ENCODE measurements at regions of chr18 and their contacts with region 1.

Region 1: GRCh38 chr18:62584241-62585120 is 61.7 kb downstream of the ZCCHC2 start:
- DNase-seq: peak; percentile 75 to 93
- ATAC-seq: peak; percentile 95 to 99 (median 97)
- H3K4me3 ChIP-seq: no peak overlapping the region
- H3K4me3 Mint-ChIP-seq: peak overlapping the region; percentile 74
- H3K27ac ChIP-seq: peak overlapping the region; percentile 20
- H3K27ac Mint-ChIP-seq: peak overlapping the region; percentile 67 to 84
- H3K4me1 ChIP-seq: peaks cover 21% of the 10 kb centered on the region
- H3K4me1 Mint-ChIP-seq: peaks cover 15 to 18% of the 10 kb centered on the region in 2 donors
- H3K27me3 ChIP-seq: no peaks in the 10 kb centered on the region
- H3K27me3 Mint-ChIP-seq: no peaks in the 10 kb centered on the region
- CTCF ChIP-seq: peak; percentile 82

Region 2: GRCh38 chr18:61825386-61825785 is 759.1 kb before region 1 on chr18:
- intact Hi-C with region 1: no loop called
- DNase-seq: no peak
- ATAC-seq: no peak
- H3K4me3 ChIP-seq: no peak overlapping the region
- H3K4me3 Mint-ChIP-seq: no peak overlapping the region
- H3K27ac ChIP-seq: no peak overlapping the region
- H3K27ac Mint-ChIP-seq: no peak overlapping the region
- H3K4me1 ChIP-seq: no peaks in the 10 kb centered on the region
- H3K4me1 Mint-ChIP-seq: no peaks in the 10 kb centered on the region
- H3K27me3 ChIP-seq: no peaks in the 10 kb centered on the region
- H3K27me3 Mint-ChIP-seq: peaks cover 12 to 13% of the 10 kb centered on the region in 2 donors
- CTCF ChIP-seq: no peak

Region 3: DNA sequence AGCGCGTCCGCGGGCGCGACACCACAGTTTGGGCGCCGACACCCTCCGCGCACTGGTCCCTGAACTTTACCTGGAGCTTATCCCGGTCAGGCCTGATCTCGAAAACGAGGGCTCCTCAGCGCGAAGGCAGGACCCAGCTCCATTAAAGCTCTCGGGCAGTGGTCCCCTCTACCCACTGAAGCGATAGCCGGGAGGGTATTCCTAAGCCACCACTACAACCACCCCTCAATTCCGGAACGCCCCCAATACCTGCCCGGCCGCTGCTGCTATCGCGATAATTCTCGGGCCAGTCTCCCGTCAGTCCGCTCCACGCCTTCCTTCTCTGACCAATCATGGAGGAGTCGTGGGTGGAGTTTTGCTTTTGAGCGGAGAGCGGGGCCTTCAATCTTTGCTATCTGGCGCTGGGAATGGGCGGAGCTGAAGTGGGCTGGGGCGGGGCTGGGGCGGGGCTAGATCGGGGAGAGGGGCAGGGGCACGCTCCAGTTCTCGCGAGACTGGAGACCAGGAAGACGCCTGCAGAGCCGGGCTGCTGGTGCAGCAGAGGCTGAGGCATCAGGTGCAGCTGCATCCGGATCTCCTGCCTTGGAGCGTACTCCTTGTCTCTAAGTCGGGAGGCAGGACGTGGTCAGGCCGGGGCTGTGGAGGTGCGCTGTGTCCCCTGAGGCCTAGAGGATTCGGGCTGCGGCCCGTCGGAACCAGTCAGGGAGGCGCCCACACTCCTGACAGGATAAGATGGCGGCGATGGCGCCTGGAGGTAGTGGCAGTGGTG is 397.5 kb before region 1 on chr18 and contains the starts of genes PIGN and RELCH:
- intact Hi-C with region 1: loop called (anchors 1 kb)
- DNase-seq: peak; percentile 85 to 98
- ATAC-seq: peak; percentile 90 to 99 (median 94)
- H3K4me3 ChIP-seq: peak within 1 kb of the TSS; percentile 95
- H3K4me3 Mint-ChIP-seq: peak within 1 kb of the TSS; percentile 100
- H3K27ac ChIP-seq: peak within 1 kb of the TSS; percentile 74
- H3K27ac Mint-ChIP-seq: peak within 1 kb of the TSS; percentile 96 to 98
- H3K4me1 ChIP-seq: peaks cover 20% of the 10 kb centered on the region
- H3K4me1 Mint-ChIP-seq: peaks cover 60 to 61% of the 10 kb centered on the region in 2 donors
- H3K27me3 ChIP-seq: no peaks in the 10 kb centered on the region
- H3K27me3 Mint-ChIP-seq: no peaks in the 10 kb centered on the region
- CTCF ChIP-seq: no peak
- total RNA-seq, gene PIGN: 12.2 to 21.7 (median 20.1) TPM
- total RNA-seq, gene RELCH: 60.1 to 69.9 (median 63.9) TPM

Region 4: DNA sequence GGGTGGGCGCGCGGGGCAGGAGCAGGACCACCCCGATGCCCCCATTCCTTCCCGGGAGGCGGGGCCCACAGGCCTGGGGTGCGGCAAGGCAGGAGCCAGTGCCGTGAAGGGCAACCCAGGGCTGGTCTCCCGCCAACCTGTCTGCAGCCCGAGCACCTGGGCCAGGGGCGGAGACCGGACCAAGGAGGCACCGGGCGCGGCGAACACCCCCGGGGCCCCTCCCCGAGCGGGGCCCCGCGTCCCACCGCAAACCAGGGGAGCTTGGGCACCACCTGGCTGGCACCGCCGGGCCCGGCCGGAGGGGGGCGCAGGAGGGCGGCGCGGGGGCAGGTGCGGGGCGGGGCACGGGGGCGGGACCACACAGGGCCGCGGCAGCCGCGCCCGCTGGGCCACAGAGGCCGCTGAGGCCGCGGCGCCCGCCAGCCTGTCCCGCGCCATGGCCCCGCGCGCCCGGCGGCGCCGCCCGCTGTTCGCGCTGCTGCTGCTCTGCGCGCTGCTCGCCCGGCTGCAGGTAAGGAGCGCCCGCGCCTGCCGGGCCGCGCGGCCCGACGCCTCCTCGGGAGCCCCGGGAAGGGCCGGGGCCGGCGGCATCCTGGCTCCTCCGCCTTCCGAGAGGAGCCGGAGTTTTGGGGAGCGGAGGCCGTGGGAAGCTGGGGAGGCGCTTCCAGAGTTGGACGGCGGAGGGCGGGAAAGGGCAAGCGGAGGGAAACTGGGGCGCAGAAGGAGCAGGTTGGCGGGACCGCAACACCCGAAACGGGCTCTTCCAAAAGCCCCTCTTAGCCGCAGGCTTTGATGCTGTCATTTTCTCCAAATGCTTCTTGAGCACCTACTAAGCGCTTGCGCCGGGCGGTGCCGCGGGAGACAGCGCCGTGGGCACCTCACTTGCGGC is 259.3 kb before region 1 on chr18 and contains the start of gene TNFRSF11A:
- intact Hi-C with region 1: loop called (anchors 2 kb)
- DNase-seq: peak; percentile 47 to 71
- ATAC-seq: peak; percentile 68 to 78 (median 70)
- H3K4me3 ChIP-seq: peak within 1 kb of the TSS; percentile 56
- H3K4me3 Mint-ChIP-seq: peak within 1 kb of the TSS; percentile 83
- H3K27ac ChIP-seq: peak within 1 kb of the TSS; percentile 1
- H3K27ac Mint-ChIP-seq: peak within 1 kb of the TSS; percentile 17 to 79
- H3K4me1 ChIP-seq: peaks cover 48% of the 10 kb centered on the region
- H3K4me1 Mint-ChIP-seq: peaks cover 37 to 46% of the 10 kb centered on the region in 2 donors
- H3K27me3 ChIP-seq: peaks cover 7% of the 10 kb centered on the region
- H3K27me3 Mint-ChIP-seq: peaks cover 44 to 48% of the 10 kb centered on the region in 2 donors
- CTCF ChIP-seq: no peak
- total RNA-seq, gene TNFRSF11A: 6.9 to 10.9 (median 8.8) TPM

Region 5: GRCh38 chr18:62425465-62426195 is 158.9 kb before region 1 on chr18:
- intact Hi-C with region 1: loop called (anchors 1 kb)
- DNase-seq: peak in 1 of 2 donors; percentile 83
- ATAC-seq: peak; percentile 64 to 73 (median 65)
- H3K4me3 ChIP-seq: no peak overlapping the region
- H3K4me3 Mint-ChIP-seq: no peak overlapping the region
- H3K27ac ChIP-seq: no peak overlapping the region
- H3K27ac Mint-ChIP-seq: peak overlapping the region in 1 of 2 donors; percentile 26
- H3K4me1 ChIP-seq: peaks cover 10% of the 10 kb centered on the region
- H3K4me1 Mint-ChIP-seq: peaks cover 12 to 20% of the 10 kb centered on the region in 2 donors
- H3K27me3 ChIP-seq: no peaks in the 10 kb centered on the region
- H3K27me3 Mint-ChIP-seq: peaks cover 9 to 18% of the 10 kb centered on the region in 2 donors
- CTCF ChIP-seq: peak; percentile 79

Region 6: GRCh38 chr18:62505669-62506494 is 78.6 kb before region 1 on chr18:
- intact Hi-C with region 1: loop called (anchors 5 kb)
- DNase-seq: peak in 1 of 2 donors; percentile 69
- ATAC-seq: peak; percentile 70 to 82 (median 79)
- H3K4me3 ChIP-seq: peak overlapping the region; percentile 36
- H3K4me3 Mint-ChIP-seq: peak overlapping the region; percentile 92
- H3K27ac ChIP-seq: peak overlapping the region; percentile 76
- H3K27ac Mint-ChIP-seq: peak overlapping the region; percentile 88 to 93
- H3K4me1 ChIP-seq: peaks cover 14% of the 10 kb centered on the region
- H3K4me1 Mint-ChIP-seq: peaks cover 11 to 13% of the 10 kb centered on the region in 2 donors
- H3K27me3 ChIP-seq: no peaks in the 10 kb centered on the region
- H3K27me3 Mint-ChIP-seq: no peaks in the 10 kb centered on the region
- CTCF ChIP-seq: no peak

Region 7: GRCh38 chr18:62838475-62839098 is 254.1 kb after region 1 on chr18:
- intact Hi-C with region 1: no loop called
- DNase-seq: no peak
- ATAC-seq: no peak
- H3K4me3 ChIP-seq: no peak overlapping the region
- H3K4me3 Mint-ChIP-seq: no peak overlapping the region
- H3K27ac ChIP-seq: no peak overlapping the region
- H3K27ac Mint-ChIP-seq: no peak overlapping the region
- H3K4me1 ChIP-seq: no peaks in the 10 kb centered on the region
- H3K4me1 Mint-ChIP-seq: peaks cover 0 to 8% of the 10 kb centered on the region in 2 donors
- H3K27me3 ChIP-seq: no peaks in the 10 kb centered on the region
- H3K27me3 Mint-ChIP-seq: no peaks in the 10 kb centered on the region
- CTCF ChIP-seq: no peak

Region 8: GRCh38 chr18:62982600-62983251 is 398.2 kb after region 1 on chr18:
- intact Hi-C with region 1: loop called (anchors 5 kb)
- DNase-seq: peak in 1 of 2 donors; percentile 80
- ATAC-seq: peak in 2 of 3 donors; percentile 68 to 74
- H3K4me3 ChIP-seq: no peak overlapping the region
- H3K4me3 Mint-ChIP-seq: peak overlapping the region; percentile 64
- H3K27ac ChIP-seq: no peak overlapping the region
- H3K27ac Mint-ChIP-seq: no peak overlapping the region
- H3K4me1 ChIP-seq: peaks cover 5% of the 10 kb centered on the region
- H3K4me1 Mint-ChIP-seq: peaks cover 7 to 8% of the 10 kb centered on the region in 2 donors
- H3K27me3 ChIP-seq: no peaks in the 10 kb centered on the region
- H3K27me3 Mint-ChIP-seq: no peaks in the 10 kb centered on the region
- CTCF ChIP-seq: peak; percentile 72